B cell (primary cell): ENCODE measurements at regions of chr1 and their contacts with region 1.

Region 1: DNA sequence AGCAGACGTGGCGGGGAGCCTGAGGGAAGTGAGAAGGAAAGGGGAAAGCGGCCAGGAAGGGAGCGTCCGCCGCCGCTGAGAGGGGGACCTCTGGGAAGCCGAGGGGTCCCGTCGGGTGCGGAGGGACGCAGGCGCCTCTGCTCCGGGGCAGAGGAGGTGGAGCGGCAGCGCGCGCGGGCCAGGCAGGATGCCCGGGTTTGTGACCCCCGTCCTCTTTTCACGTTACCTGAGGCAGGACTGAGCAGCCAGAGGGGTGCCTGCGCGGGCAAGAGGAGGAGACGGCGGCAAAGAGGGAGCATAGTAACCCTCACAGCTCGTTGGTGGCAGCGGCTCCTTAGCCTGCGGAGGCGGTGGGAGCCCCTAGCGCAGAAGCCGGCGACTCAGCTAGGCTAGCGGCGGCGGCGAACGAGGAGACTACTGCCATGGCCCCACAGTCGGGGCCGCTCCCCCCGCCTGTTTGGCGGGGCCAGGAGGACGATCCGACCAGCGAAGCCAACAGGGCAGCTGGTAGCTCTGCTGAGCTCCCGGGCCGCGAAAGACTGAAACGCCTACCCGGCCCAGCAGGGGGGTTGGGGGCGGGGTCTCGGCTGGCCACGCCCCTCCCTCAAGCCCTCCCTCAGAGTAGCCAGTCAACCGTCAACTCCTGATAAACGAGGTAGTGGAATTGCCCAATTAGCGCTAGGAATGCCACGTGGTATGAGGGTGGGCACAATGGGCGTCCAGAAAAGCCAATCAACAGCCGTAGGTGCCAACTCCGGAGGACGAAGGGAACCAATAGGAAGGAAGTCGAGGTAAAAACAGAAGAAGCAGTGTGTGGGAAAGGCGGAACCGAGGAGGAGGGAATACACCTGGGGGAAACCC is at the start of gene TESK2:
- DNase-seq: peak; percentile 99
- ATAC-seq: peak; percentile 88
- H3K4me3 ChIP-seq: peak within 1 kb of the TSS; percentile 67 to 88 (median 83)
- H3K4me3 Mint-ChIP-seq: no peak within 1 kb of the TSS
- H3K27ac ChIP-seq: peak within 1 kb of the TSS; percentile 60 to 80
- H3K27ac Mint-ChIP-seq: no peak within 1 kb of the TSS
- H3K4me1 ChIP-seq: peaks cover 28% of the 10 kb centered on the region in 2 donors
- H3K4me1 Mint-ChIP-seq: peaks cover 22% of the 10 kb centered on the region
- H3K27me3 ChIP-seq: no peaks in the 10 kb centered on the region
- H3K27me3 Mint-ChIP-seq: no peaks in the 10 kb centered on the region
- CTCF ChIP-seq: peak; percentile 7
- total RNA-seq, gene TESK2: 26.2 and 27.0 TPM in 2 replicates

Region 2: GRCh38 chr1:44730741-44731512 is 759.9 kb before region 1 on chr1 and contains the start of gene RNU5D-1:
- CTCF ChIA-PET with region 1: interaction called, 5 read pairs
- POLR2A ChIA-PET with region 1: no interaction called
- intact Hi-C with region 1: loop called (anchors 5 kb)
- DNase-seq: peak; percentile 97
- ATAC-seq: peak; percentile 74
- H3K4me3 ChIP-seq: peak within 1 kb of the TSS; percentile 17 to 68 (median 50)
- H3K4me3 Mint-ChIP-seq: peak within 1 kb of the TSS; percentile 92
- H3K27ac ChIP-seq: peak within 1 kb of the TSS; percentile 93 to 96
- H3K27ac Mint-ChIP-seq: peak within 1 kb of the TSS; percentile 100
- H3K4me1 ChIP-seq: peaks cover 12 to 24% of the 10 kb centered on the region in 2 donors
- H3K4me1 Mint-ChIP-seq: peaks cover 24% of the 10 kb centered on the region
- H3K27me3 ChIP-seq: no peaks in the 10 kb centered on the region
- H3K27me3 Mint-ChIP-seq: no peaks in the 10 kb centered on the region
- CTCF ChIP-seq: peak; percentile 87
- total RNA-seq, gene RNU5D-1: not detected in 2 replicates

Region 3: GRCh38 chr1:45097944-45098343 is 392.9 kb before region 1 on chr1:
- CTCF ChIA-PET with region 1: no interaction called
- POLR2A ChIA-PET with region 1: no interaction called
- intact Hi-C with region 1: no loop called
- DNase-seq: no peak
- ATAC-seq: no peak
- H3K4me3 ChIP-seq: no peak overlapping the region
- H3K4me3 Mint-ChIP-seq: no peak overlapping the region
- H3K27ac ChIP-seq: no peak overlapping the region
- H3K27ac Mint-ChIP-seq: no peak overlapping the region
- H3K4me1 ChIP-seq: no peaks in the 10 kb centered on the region
- H3K4me1 Mint-ChIP-seq: no peaks in the 10 kb centered on the region
- H3K27me3 ChIP-seq: peaks cover 0 to 3% (median 1%) of the 10 kb centered on the region in 4 experiments
- H3K27me3 Mint-ChIP-seq: peaks cover 19% of the 10 kb centered on the region
- CTCF ChIP-seq: no peak

Region 4: GRCh38 chr1:45303582-45304310 is 187.1 kb before region 1 on chr1:
- CTCF ChIA-PET with region 1: interaction called, 41 read pairs
- POLR2A ChIA-PET with region 1: interaction called, 10 read pairs
- intact Hi-C with region 1: loop called (anchors 1 kb)
- DNase-seq: peak; percentile 98
- ATAC-seq: peak; percentile 84
- H3K4me3 ChIP-seq: peak overlapping the region; percentile 47 to 87 (median 82)
- H3K4me3 Mint-ChIP-seq: peak overlapping the region; percentile 94
- H3K27ac ChIP-seq: peak overlapping the region; percentile 85 to 97
- H3K27ac Mint-ChIP-seq: peak overlapping the region; percentile 95
- H3K4me1 ChIP-seq: peaks cover 19 to 27% of the 10 kb centered on the region in 2 donors
- H3K4me1 Mint-ChIP-seq: peaks cover 34% of the 10 kb centered on the region
- H3K27me3 ChIP-seq: no peaks in the 10 kb centered on the region
- H3K27me3 Mint-ChIP-seq: no peaks in the 10 kb centered on the region
- CTCF ChIP-seq: peak; percentile 74

Region 5: GRCh38 chr1:45359882-45360513 is 130.9 kb before region 1 on chr1:
- CTCF ChIA-PET with region 1: interaction called, 478 read pairs
- POLR2A ChIA-PET with region 1: interaction called, 22 read pairs
- intact Hi-C with region 1: loop called (anchors 1 kb)
- DNase-seq: peak; percentile 77
- ATAC-seq: peak; percentile 67
- H3K4me3 ChIP-seq: no peak overlapping the region
- H3K4me3 Mint-ChIP-seq: peak overlapping the region; percentile 28
- H3K27ac ChIP-seq: peak overlapping the region in 1 of 2 donors; percentile 68
- H3K27ac Mint-ChIP-seq: peak overlapping the region; percentile 37
- H3K4me1 ChIP-seq: peaks cover 7 to 12% of the 10 kb centered on the region in 2 donors
- H3K4me1 Mint-ChIP-seq: peaks cover 24% of the 10 kb centered on the region
- H3K27me3 ChIP-seq: no peaks in the 10 kb centered on the region
- H3K27me3 Mint-ChIP-seq: no peaks in the 10 kb centered on the region
- CTCF ChIP-seq: peak; percentile 83

Region 6: GRCh38 chr1:45393718-45394302 is 97.0 kb before region 1 on chr1:
- CTCF ChIA-PET with region 1: interaction called, 17 read pairs
- POLR2A ChIA-PET with region 1: interaction called, 19 read pairs
- intact Hi-C with region 1: loop called (anchors 1 kb)
- DNase-seq: peak; percentile 82
- ATAC-seq: peak; percentile 82
- H3K4me3 ChIP-seq: peak overlapping the region in 4 of 5 experiments; percentile 1 to 52 (median 24)
- H3K4me3 Mint-ChIP-seq: peak overlapping the region; percentile 82
- H3K27ac ChIP-seq: peak overlapping the region; percentile 96 to 99
- H3K27ac Mint-ChIP-seq: peak overlapping the region; percentile 99
- H3K4me1 ChIP-seq: peaks cover 35 to 37% of the 10 kb centered on the region in 2 donors
- H3K4me1 Mint-ChIP-seq: peaks cover 44% of the 10 kb centered on the region
- H3K27me3 ChIP-seq: no peaks in the 10 kb centered on the region
- H3K27me3 Mint-ChIP-seq: no peaks in the 10 kb centered on the region
- CTCF ChIP-seq: no peak

Region 7: GRCh38 chr1:45512641-45513054 is 21.8 kb after region 1 on chr1:
- CTCF ChIA-PET with region 1: interaction called, 34 read pairs
- POLR2A ChIA-PET with region 1: interaction called, 5 read pairs
- intact Hi-C with region 1: no loop called
- DNase-seq: peak; percentile 76
- ATAC-seq: peak; percentile 66
- H3K4me3 ChIP-seq: no peak overlapping the region
- H3K4me3 Mint-ChIP-seq: no peak overlapping the region
- H3K27ac ChIP-seq: no peak overlapping the region
- H3K27ac Mint-ChIP-seq: peak overlapping the region; percentile 76
- H3K4me1 ChIP-seq: no peaks in the 10 kb centered on the region
- H3K4me1 Mint-ChIP-seq: peaks cover 8% of the 10 kb centered on the region
- H3K27me3 ChIP-seq: no peaks in the 10 kb centered on the region
- H3K27me3 Mint-ChIP-seq: no peaks in the 10 kb centered on the region
- CTCF ChIP-seq: peak; percentile 89

Region 8: DNA sequence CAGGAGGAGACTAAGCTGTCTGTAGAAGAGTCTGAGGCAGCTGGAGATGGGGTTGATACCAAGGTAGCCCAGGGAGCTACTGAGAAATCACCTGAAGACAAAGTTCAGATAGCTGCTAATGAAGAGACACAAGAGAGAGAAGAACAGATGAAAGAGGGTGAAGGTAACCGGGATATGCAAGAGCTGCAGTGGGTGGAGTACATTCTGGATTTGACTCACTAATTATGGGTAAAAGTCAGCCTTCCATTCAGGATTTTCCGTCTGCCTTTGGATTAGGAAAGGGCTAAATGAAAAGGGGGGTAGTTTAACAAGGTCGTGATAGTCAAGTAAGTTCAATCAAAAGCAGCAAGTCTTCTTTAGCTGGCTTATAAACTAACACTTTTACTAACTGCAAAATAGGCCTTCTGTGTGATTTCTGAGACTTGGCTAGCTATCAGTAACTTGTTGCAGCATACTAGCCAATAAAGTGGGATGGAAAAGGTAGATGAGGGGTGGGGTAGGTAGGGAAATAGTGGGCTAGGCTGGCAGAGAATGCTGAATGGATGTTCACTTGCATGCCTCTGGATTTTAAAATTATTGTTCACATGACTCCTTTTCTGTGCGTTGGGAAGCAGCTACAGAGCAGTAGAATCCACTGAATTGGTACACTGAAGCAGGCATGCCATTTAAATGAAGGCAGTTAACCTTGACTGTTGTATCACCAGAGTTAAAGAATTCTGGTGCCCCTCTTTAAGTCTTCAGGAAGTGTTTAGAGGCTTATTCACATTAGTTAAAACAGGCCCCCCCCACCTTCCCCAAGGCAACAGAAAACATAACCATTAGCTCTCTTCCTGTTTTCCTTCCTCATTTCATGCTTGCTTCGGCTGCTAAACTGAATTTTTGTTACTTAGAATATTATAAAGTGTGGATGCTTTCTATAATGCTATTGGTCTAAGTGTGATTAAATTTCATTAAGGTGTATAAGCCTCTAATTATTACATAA is 117.6 kb after region 1 on chr1:
- CTCF ChIA-PET with region 1: no interaction called
- POLR2A ChIA-PET with region 1: no interaction called
- intact Hi-C with region 1: no loop called
- DNase-seq: peak; percentile 74
- ATAC-seq: peak; percentile 72
- H3K4me3 ChIP-seq: peak overlapping the region in 1 of 5 experiments; percentile 21
- H3K4me3 Mint-ChIP-seq: peak overlapping the region; percentile 14
- H3K27ac ChIP-seq: peak overlapping the region; percentile 57 to 72
- H3K27ac Mint-ChIP-seq: peak overlapping the region; percentile 62
- H3K4me1 ChIP-seq: peaks cover 25 to 35% of the 10 kb centered on the region in 2 donors
- H3K4me1 Mint-ChIP-seq: peaks cover 42% of the 10 kb centered on the region
- H3K27me3 ChIP-seq: no peaks in the 10 kb centered on the region
- H3K27me3 Mint-ChIP-seq: no peaks in the 10 kb centered on the region
- CTCF ChIP-seq: no peak

Region 9: GRCh38 chr1:45643978-45644377 is 153.1 kb after region 1 on chr1:
- CTCF ChIA-PET with region 1: no interaction called
- POLR2A ChIA-PET with region 1: no interaction called
- intact Hi-C with region 1: no loop called
- DNase-seq: no peak
- ATAC-seq: no peak
- H3K4me3 ChIP-seq: no peak overlapping the region
- H3K4me3 Mint-ChIP-seq: no peak overlapping the region
- H3K27ac ChIP-seq: peak overlapping the region in 1 of 2 donors; percentile 14
- H3K27ac Mint-ChIP-seq: no peak overlapping the region
- H3K4me1 ChIP-seq: peaks cover 8 to 11% of the 10 kb centered on the region in 2 donors
- H3K4me1 Mint-ChIP-seq: peaks cover 29% of the 10 kb centered on the region
- H3K27me3 ChIP-seq: no peaks in the 10 kb centered on the region
- H3K27me3 Mint-ChIP-seq: no peaks in the 10 kb centered on the region
- CTCF ChIP-seq: no peak

Region 10: GRCh38 chr1:46166521-46167462 is 675.9 kb after region 1 on chr1:
- CTCF ChIA-PET with region 1: no interaction called
- POLR2A ChIA-PET with region 1: no interaction called
- intact Hi-C with region 1: no loop called
- DNase-seq: peak; percentile 58
- ATAC-seq: peak; percentile 47
- H3K4me3 ChIP-seq: peak overlapping the region; percentile 50 to 86 (median 65)
- H3K4me3 Mint-ChIP-seq: peak overlapping the region; percentile 90
- H3K27ac ChIP-seq: peak overlapping the region; percentile 1 to 46
- H3K27ac Mint-ChIP-seq: peak overlapping the region; percentile 57
- H3K4me1 ChIP-seq: peaks cover 18 to 25% of the 10 kb centered on the region in 2 donors
- H3K4me1 Mint-ChIP-seq: peaks cover 27% of the 10 kb centered on the region
- H3K27me3 ChIP-seq: peaks cover 0 to 17% (median 0%) of the 10 kb centered on the region in 4 experiments
- H3K27me3 Mint-ChIP-seq: peaks cover 21% of the 10 kb centered on the region
- CTCF ChIP-seq: no peak